HepG2 (cell line): ENCODE measurements at regions of chr15 and their contacts with region 1.

Region 1: GRCh38 chr15:67839929-67840748 is at the start of gene RNU6-1:
- DNase-seq: peak; percentile 80
- ATAC-seq: peak; percentile 26
- H3K4me3 ChIP-seq: peak within 1 kb of the TSS; percentile 73 to 98 (median 93)
- H3K27ac ChIP-seq: peak within 1 kb of the TSS; percentile 86
- H3K4me1 ChIP-seq: peaks cover 81% of the 10 kb centered on the region
- H3K27me3 ChIP-seq: peaks cover 0 to 15% of the 10 kb centered on the region in 2 experiments; a peak in 4 of 5 replicates
- CTCF ChIP-seq: no peak
- EP300 ChIP-seq: no peak
- POLR2A ChIP-seq: peak; percentile 68 to 84
- RAD21 ChIP-seq: no peak
- total RNA-seq, gene RNU6-1: under 0.01 TPM in 1 of 2 replicates, not detected in the other

Region 2: DNA sequence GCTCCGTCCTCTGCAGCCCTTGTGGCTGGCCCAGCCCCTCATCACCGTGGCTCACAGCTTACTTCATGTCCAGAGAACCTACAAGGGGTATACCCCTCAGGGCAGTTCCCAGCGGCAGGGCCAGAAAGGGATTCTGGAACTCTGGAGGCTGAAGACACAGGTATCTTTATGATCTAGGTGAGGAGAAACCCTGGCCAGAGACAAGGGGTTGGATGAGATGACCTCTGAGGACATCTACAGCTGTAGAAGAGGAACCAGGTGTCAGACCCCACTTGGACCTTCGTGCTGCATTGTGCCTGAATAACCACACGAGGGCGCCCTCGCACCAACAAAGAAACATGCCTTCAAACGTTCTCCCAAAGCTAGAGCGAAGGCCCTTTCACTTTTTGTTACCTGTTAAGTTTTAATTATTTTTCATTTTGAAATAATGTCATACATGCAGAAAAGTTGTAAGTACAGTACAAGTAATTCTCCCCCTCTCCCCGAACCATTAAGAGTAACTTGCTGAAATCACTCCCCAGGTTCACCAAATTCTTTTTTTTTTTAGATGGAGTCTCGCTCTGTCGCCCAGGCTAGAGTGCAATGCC is 893.5 kb before region 1 on chr15:
- CTCF ChIA-PET with region 1: no interaction called
- POLR2A ChIA-PET with region 1: no interaction called
- in situ Hi-C with region 1: loop called (anchors 10 kb)
- intact Hi-C with region 1: no loop called
- DNase-seq: peak; percentile 67
- ATAC-seq: peak; percentile 65
- H3K4me3 ChIP-seq: peak overlapping the region in 1 of 3 experiments; percentile 25; a peak in 1 of 6 replicates
- H3K27ac ChIP-seq: no peak overlapping the region
- H3K4me1 ChIP-seq: peaks cover 42% of the 10 kb centered on the region
- H3K27me3 ChIP-seq: peaks cover 1 to 16% of the 10 kb centered on the region in 2 experiments; a peak in 3 of 5 replicates
- CTCF ChIP-seq: peak; percentile 93
- EP300 ChIP-seq: no peak
- POLR2A ChIP-seq: no peak
- RAD21 ChIP-seq: peak; percentile 89

Region 3: DNA sequence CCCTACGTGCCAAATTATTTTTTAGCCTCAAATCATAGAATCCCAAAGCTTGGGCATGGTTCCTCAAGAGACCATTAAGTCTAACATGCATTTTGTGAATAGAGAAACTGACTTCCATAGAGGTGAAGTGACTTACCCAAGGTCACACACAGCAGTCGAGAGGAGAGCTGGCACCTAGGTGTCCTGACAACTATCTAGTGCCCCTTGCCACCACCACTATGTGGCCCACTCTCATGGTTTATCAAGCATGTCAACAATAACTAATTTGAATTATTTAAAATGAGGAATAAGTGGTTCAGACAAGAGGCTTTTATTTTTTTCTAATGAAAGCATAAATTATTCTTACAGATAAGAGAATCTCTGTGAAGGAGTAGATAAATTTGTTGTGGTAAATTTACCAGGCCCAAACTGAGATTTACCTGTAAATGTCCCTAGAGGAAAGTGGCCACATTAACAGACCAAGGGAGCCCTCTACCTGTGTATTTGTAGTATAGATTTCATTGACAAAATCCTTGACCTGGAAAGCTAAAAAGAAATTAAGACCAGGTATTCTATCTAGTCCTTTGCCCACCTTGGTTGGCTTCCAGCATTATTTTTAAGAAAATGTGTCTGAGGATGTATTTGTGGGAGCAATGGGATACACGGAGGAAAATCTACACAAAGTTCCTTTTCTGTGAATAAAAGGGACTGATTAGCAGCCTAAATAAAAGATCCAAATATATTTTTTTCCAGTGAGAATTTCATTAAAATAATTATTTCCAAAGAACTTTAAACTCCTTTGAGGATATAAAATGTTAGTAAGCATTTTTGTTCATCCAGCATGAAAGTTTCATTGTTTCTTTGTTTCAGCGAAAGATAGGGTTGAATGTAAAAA is 536.4 kb before region 1 on chr15:
- CTCF ChIA-PET with region 1: no interaction called
- POLR2A ChIA-PET with region 1: no interaction called
- in situ Hi-C with region 1: no loop called
- intact Hi-C with region 1: loop called (anchors 5 kb)
- DNase-seq: peak; percentile 49
- ATAC-seq: peak; percentile 64
- H3K4me3 ChIP-seq: no peak overlapping the region
- H3K27ac ChIP-seq: no peak overlapping the region
- H3K4me1 ChIP-seq: no peaks in the 10 kb centered on the region
- H3K27me3 ChIP-seq: no peaks in the 10 kb centered on the region
- CTCF ChIP-seq: peak; percentile 70
- EP300 ChIP-seq: no peak
- POLR2A ChIP-seq: no peak
- RAD21 ChIP-seq: peak; percentile 45; the same call in 1 of the 2 replicates

Region 4: GRCh38 chr15:67456677-67457529 is 383.2 kb before region 1 on chr15:
- CTCF ChIA-PET with region 1: interaction called, 50 read pairs
- POLR2A ChIA-PET with region 1: no interaction called
- in situ Hi-C with region 1: loop called (anchors 5 kb)
- intact Hi-C with region 1: loop called (anchors 1 kb)
- DNase-seq: peak; percentile 49
- ATAC-seq: peak; percentile 96
- H3K4me3 ChIP-seq: no peak overlapping the region
- H3K27ac ChIP-seq: no peak overlapping the region
- H3K4me1 ChIP-seq: peaks cover 7% of the 10 kb centered on the region
- H3K27me3 ChIP-seq: no peaks in the 10 kb centered on the region
- CTCF ChIP-seq: peak; percentile 88
- EP300 ChIP-seq: no peak
- POLR2A ChIP-seq: no peak
- RAD21 ChIP-seq: peak; percentile 69; the same call in 1 of the 2 replicates

Region 5: GRCh38 chr15:67542420-67543347 is 297.5 kb before region 1 on chr15 and contains the start of gene MAP2K5:
- CTCF ChIA-PET with region 1: no interaction called
- POLR2A ChIA-PET with region 1: no interaction called
- in situ Hi-C with region 1: no loop called
- intact Hi-C with region 1: loop called (anchors 5 kb)
- DNase-seq: peak; percentile 48
- ATAC-seq: peak; percentile 85
- H3K4me3 ChIP-seq: peak within 1 kb of the TSS; percentile 76 to 99 (median 84)
- H3K27ac ChIP-seq: peak within 1 kb of the TSS; percentile 76
- H3K4me1 ChIP-seq: peaks cover 25% of the 10 kb centered on the region
- H3K27me3 ChIP-seq: no peaks in the 10 kb centered on the region; a peak in 1 of 5 replicates
- CTCF ChIP-seq: peak; percentile 26; the same call in 1 of the 2 replicates
- EP300 ChIP-seq: no peak
- POLR2A ChIP-seq: peak; percentile 70 to 81
- RAD21 ChIP-seq: no peak
- total RNA-seq, gene MAP2K5: 4.3 and 6.3 TPM in 2 replicates

Region 6: DNA sequence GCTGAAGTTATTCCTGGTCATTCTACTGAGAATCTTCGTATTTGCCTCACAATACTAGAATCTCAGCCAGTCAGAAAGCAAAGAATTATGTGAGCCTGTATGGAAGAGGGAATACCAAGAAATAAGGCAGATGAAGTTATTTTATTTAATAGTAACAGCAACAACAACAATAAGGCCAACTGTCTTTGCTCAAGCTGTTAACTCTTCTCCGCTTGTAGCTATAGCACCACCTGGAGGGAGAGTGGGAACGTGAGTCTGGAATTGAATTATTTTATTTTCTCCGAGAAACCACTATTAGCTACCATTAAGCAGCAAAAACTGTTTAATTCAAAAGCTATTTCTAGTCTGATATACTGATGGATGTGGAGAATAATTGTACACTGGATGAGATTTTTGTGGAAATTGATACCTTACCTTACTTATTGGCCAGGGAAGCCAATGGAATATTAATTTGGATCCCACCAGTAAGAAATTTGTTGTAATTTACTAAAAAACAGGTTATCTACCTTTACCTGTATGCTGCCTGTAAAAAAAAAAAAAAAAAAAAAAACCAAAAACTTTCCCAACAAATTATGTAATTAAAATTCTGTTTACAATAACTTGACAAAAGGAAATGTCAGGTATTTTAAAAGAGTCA is 314.9 kb after region 1 on chr15:
- CTCF ChIA-PET with region 1: no interaction called
- POLR2A ChIA-PET with region 1: no interaction called
- in situ Hi-C with region 1: no loop called
- intact Hi-C with region 1: loop called (anchors 2 kb)
- DNase-seq: peak; percentile 53
- ATAC-seq: no peak
- H3K4me3 ChIP-seq: no peak overlapping the region
- H3K27ac ChIP-seq: no peak overlapping the region
- H3K4me1 ChIP-seq: peaks cover 8% of the 10 kb centered on the region
- H3K27me3 ChIP-seq: no peaks in the 10 kb centered on the region
- CTCF ChIP-seq: peak; percentile 74
- EP300 ChIP-seq: no peak
- POLR2A ChIP-seq: no peak
- RAD21 ChIP-seq: peak; percentile 68; the same call in 1 of the 2 replicates

Region 7: DNA sequence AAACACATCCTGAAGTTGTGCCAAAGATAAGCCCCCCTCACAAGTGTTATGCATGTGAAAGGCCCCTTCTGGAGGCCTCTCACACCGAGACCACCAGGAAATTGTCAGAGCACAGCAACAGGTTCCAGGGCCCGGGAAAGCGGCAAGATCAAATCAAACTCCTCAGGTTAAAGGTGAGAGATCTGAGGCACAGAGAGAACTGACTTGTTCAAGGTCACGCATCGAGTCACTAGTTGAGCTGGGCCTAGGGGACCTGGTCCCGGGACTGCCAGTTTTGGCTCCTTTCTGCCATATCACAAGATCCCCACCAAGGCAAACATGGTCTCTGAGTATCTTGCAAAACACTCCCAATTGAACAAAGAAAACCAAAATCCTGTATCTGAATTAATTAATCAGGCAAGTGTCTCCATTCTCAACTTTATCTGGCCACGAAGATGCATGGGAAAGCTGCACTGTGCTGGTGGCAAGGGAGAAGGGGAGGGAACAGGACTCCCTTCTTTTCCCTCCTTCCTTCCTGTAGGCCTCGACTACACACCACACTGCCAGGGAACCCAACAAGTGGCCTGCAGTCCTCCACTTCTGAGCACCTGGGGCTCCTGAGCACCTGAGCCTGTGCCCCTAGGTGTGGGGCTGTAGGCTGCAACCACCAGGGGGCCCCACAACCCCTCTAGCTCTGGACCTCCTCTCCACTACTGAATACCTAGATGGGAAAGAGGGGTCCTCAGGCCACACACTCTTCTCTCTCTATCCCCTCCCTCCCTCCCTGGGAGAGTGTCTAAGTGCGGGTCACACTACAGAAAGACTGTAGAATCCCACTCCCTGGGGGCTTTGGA is 943.3 kb after region 1 on chr15:
- CTCF ChIA-PET with region 1: no interaction called
- POLR2A ChIA-PET with region 1: no interaction called
- in situ Hi-C with region 1: no loop called
- intact Hi-C with region 1: no loop called
- DNase-seq: peak; percentile 19
- ATAC-seq: peak; percentile 93
- H3K4me3 ChIP-seq: no peak overlapping the region
- H3K27ac ChIP-seq: no peak overlapping the region
- H3K4me1 ChIP-seq: no peaks in the 10 kb centered on the region
- H3K27me3 ChIP-seq: no peaks in the 10 kb centered on the region
- CTCF ChIP-seq: peak; percentile 73
- EP300 ChIP-seq: no peak
- POLR2A ChIP-seq: no peak
- RAD21 ChIP-seq: peak; percentile 62; the same call in 1 of the 2 replicates